GM10248 (cell line): ENCODE measurements at regions of chr3 and their contacts with region 1.

Region 1: GRCh38 chr3:179108086-179108485 is 36.5 kb upstream of the ZMAT3 start:
- DNase-seq: no peak
- CTCF ChIP-seq: no peak

Region 2: DNA sequence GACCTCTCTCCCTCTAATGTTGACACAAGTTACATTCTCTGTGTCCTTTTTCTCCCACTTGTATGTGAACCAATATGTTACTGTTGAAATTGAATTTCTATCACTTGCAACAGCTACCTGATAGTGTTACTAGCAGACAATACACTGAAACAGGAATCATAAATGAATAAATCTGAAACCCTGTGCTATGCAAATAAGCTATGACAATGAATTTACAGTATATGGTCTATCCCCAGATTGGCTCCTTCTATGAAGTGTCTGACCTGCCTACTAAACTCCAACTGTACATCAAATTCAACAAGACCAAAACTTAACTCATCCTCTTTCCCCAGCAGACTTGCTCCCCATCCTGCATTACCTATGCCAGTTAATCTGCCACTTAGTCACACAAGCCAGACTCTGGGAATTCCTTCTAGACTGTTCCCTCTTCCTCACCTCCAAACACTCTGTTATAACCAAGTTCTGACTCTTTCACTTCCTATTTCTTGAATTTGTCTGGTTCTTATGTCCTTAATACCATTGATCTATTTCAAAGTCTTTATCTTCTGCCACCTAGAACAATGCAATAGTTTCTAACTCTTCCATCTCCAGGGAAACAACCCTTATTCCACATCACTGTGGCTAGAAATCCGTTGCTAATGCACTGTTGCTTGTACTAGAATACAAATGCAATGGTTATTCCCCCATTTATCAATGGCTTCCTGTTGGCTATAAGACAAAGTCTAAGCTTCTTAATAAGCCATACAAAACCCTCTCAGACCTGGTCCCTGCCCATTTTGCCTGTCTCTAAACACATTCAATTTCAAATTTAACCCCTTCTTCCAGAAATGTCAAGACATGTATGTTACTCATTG is 201.4 kb after region 1 on chr3:
- CTCF ChIA-PET with region 1: interaction called, 19 read pairs
- POLR2A ChIA-PET with region 1: no interaction called
- DNase-seq: peak; percentile 28
- CTCF ChIP-seq: no peak

Region 3: GRCh38 chr3:179322286-179323196 is 214.5 kb after region 1 on chr3 and contains the start of gene ZNF639:
- CTCF ChIA-PET with region 1: interaction called, 11 read pairs
- POLR2A ChIA-PET with region 1: no interaction called
- DNase-seq: peak; percentile 93
- CTCF ChIP-seq: peak; percentile 72